ENCODE measurements at regions of chr15 and their contacts with region 1.

Region 1: DNA sequence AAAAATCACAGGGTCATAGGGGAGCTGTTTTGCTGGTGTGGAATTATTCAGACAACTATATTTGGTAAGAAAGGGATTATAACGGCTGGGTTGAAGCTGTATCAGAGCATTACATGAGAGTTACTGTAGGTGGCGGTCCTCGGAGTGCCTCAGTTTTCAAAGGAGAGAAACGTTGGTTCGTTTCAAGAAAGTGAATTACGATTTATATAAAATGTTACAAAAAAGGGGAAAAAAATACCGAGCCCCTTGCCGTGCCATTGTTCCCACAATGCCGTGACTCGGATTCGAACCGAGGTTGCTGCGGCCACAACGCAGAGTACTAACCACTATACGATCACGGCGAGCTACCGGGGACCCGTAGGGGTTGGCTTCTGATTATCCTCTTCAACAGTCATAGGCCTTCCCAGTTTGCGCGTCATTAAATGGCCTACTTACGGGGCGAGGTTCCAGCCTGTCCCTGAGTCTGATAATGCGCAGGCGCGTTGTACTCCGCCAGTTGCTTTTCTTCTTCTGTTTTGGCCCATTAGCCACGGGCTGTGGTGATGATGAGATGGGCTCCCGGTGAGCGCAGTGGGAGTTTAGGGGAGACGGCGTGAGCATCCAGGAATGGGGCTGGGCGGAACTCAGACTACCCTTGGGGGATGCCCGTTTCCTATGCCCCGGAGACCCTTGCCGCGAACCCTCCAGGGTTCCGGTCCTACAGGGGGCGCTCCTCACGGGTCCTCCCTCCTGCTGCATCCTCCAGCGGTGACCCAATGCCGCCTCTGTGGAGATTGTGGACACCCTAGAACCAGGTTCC is 10.8 kb upstream of the SHF start:
- H3K4me3 Mint-ChIP-seq: no peak overlapping the region
- H3K27ac Mint-ChIP-seq: no peak overlapping the region
- H3K4me1 Mint-ChIP-seq: peaks cover 19% of the 10 kb centered on the region
- H3K27me3 Mint-ChIP-seq: no peaks in the 10 kb centered on the region

Region 2: GRCh38 chr15:45087513-45087912 is 111.0 kb before region 1 on chr15:
- intact Hi-C with region 1: no loop called
- H3K4me3 Mint-ChIP-seq: no peak overlapping the region
- H3K27ac Mint-ChIP-seq: no peak overlapping the region
- H3K4me1 Mint-ChIP-seq: no peaks in the 10 kb centered on the region
- H3K27me3 Mint-ChIP-seq: peaks cover 6% of the 10 kb centered on the region

Region 3: DNA sequence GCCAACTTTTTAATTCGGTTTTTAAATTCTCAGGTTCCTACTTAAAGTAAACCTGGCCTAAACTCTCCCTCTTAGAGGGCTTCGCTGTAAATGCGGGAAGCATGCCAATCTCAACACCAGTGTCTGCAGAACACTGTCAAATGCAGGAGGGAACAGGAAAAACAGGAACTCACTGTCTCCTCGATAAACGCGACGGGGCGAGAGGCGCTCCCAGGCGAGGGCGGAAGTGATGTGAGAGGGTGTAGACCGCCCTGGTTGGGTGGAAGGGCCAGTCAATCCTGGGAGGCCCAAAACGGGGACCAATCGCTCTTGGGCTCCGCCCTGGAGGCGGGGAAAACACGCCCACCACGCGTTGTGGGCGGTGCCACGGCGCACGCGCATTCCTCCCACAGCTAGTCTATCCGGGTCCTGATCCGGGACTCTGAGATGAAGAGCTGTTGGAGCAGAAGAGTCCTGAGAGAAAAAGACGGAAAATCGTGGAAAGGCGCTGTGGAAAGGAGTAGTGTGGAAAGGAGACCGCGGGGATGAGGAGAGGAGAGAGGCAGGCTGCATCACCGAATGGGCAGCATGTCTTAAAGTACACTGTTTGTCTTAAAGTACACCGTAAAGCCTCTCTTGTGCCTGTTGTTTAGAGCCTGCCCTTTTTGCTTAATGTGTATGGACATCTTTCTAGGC is 80.6 kb after region 1 on chr15:
- intact Hi-C with region 1: loop called (anchors 2 kb)
- H3K4me3 Mint-ChIP-seq: peak overlapping the region; percentile 78
- H3K27ac Mint-ChIP-seq: peak overlapping the region; percentile 82
- H3K4me1 Mint-ChIP-seq: peaks cover 10% of the 10 kb centered on the region
- H3K27me3 Mint-ChIP-seq: peaks cover 13% of the 10 kb centered on the region

Measured in dendritic cell treated with granulocyte-macrophage colony-stimulating factor and Interleukin-4, amounts not matched to agents 40 ng/mL and 50 ng/mL, for 4 days (primary cell).